ENCODE measurements at regions of chr2 and their contacts with region 1.

Region 1: GRCh38 chr2:33475224-33476130 is 972 bp upstream of the RASGRP3 start:
- DNase-seq: peak; percentile 89
- ATAC-seq: peak; percentile 75
- H3K4me3 Mint-ChIP-seq: peak overlapping the region; percentile 80
- H3K27ac Mint-ChIP-seq: peak overlapping the region; percentile 96
- H3K4me1 Mint-ChIP-seq: peaks cover 29% of the 10 kb centered on the region
- H3K27me3 Mint-ChIP-seq: no peaks in the 10 kb centered on the region
- CTCF ChIP-seq: peak; percentile 74

Region 2: GRCh38 chr2:33304032-33304864 is 171.2 kb before region 1 on chr2:
- CTCF ChIA-PET with region 1: no interaction called
- POLR2A ChIA-PET with region 1: no interaction called
- intact Hi-C with region 1: no loop called
- DNase-seq: no peak
- ATAC-seq: no peak
- H3K4me3 Mint-ChIP-seq: no peak overlapping the region
- H3K27ac Mint-ChIP-seq: no peak overlapping the region
- H3K4me1 Mint-ChIP-seq: no peaks in the 10 kb centered on the region
- H3K27me3 Mint-ChIP-seq: no peaks in the 10 kb centered on the region
- CTCF ChIP-seq: no peak

Region 3: GRCh38 chr2:33366473-33366872 is 109.0 kb before region 1 on chr2:
- CTCF ChIA-PET with region 1: no interaction called
- POLR2A ChIA-PET with region 1: no interaction called
- intact Hi-C with region 1: no loop called
- DNase-seq: no peak
- ATAC-seq: no peak
- H3K4me3 Mint-ChIP-seq: no peak overlapping the region
- H3K27ac Mint-ChIP-seq: no peak overlapping the region
- H3K4me1 Mint-ChIP-seq: no peaks in the 10 kb centered on the region
- H3K27me3 Mint-ChIP-seq: peaks cover 2% of the 10 kb centered on the region
- CTCF ChIP-seq: no peak

Region 4: DNA sequence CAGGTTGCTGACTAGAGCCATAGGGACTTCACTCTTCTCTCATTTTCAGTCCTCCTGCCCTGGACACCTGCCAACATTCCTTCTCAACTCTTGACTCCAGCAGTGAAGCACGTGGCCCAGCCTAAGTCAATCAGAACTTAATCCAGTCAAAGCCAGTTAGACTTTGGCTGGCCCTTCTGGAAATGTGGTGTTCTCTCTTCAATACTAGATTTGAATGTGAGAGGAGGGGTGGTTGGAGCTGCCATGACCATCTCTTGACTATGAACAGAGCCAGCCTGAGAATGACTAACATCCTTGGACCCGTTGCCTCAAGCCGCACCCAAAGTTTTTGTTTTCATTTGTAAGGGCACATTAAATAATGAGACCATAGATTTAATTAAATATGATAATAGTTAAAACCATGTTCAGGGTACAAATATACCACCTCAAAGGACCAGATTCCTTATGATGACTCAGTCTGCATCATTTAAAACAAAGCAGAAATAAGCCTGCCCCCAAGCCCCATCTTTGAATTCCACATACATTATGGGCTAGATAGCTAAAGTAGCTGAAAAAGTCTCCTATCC is 48.7 kb before region 1 on chr2:
- CTCF ChIA-PET with region 1: no interaction called
- POLR2A ChIA-PET with region 1: no interaction called
- intact Hi-C with region 1: no loop called
- DNase-seq: no peak
- ATAC-seq: no peak
- H3K4me3 Mint-ChIP-seq: no peak overlapping the region
- H3K27ac Mint-ChIP-seq: no peak overlapping the region
- H3K4me1 Mint-ChIP-seq: no peaks in the 10 kb centered on the region
- H3K27me3 Mint-ChIP-seq: no peaks in the 10 kb centered on the region
- CTCF ChIP-seq: no peak

Region 5: GRCh38 chr2:33494155-33494779 is 18.8 kb after region 1 on chr2:
- CTCF ChIA-PET with region 1: interaction called, 16 read pairs
- POLR2A ChIA-PET with region 1: interaction called, 6 read pairs
- intact Hi-C with region 1: no loop called
- DNase-seq: no peak
- ATAC-seq: no peak
- H3K4me3 Mint-ChIP-seq: no peak overlapping the region
- H3K27ac Mint-ChIP-seq: no peak overlapping the region
- H3K4me1 Mint-ChIP-seq: peaks cover 23% of the 10 kb centered on the region
- H3K27me3 Mint-ChIP-seq: peaks cover 10% of the 10 kb centered on the region
- CTCF ChIP-seq: no peak

Region 6: GRCh38 chr2:33599175-33599942 is 123.9 kb after region 1 on chr2 and contains the start of gene FAM98A:
- CTCF ChIA-PET with region 1: interaction called, 17 read pairs
- POLR2A ChIA-PET with region 1: interaction called, 15 read pairs
- intact Hi-C with region 1: no loop called
- DNase-seq: peak; percentile 98
- ATAC-seq: peak; percentile 94
- H3K4me3 Mint-ChIP-seq: peak within 1 kb of the TSS; percentile 95
- H3K27ac Mint-ChIP-seq: peak within 1 kb of the TSS; percentile 92
- H3K4me1 Mint-ChIP-seq: peaks cover 25% of the 10 kb centered on the region
- H3K27me3 Mint-ChIP-seq: no peaks in the 10 kb centered on the region
- CTCF ChIP-seq: no peak
- total RNA-seq, gene FAM98A: 52.3 to 63.0 TPM